WTC11 (cell line): ENCODE measurements at regions of chr6 and their contacts with region 1.

Region 1: GRCh38 chr6:12275087-12275486 is 15.1 kb upstream of the EDN1 start:
- DNase-seq: no peak
- ATAC-seq: no peak
- H3K4me3 Mint-ChIP-seq: no peak overlapping the region
- H3K27ac Mint-ChIP-seq: no peak overlapping the region
- H3K4me1 Mint-ChIP-seq: no peaks in the 10 kb centered on the region
- H3K27me3 Mint-ChIP-seq: no peaks in the 10 kb centered on the region
- CTCF ChIP-seq: no peak

Region 2: DNA sequence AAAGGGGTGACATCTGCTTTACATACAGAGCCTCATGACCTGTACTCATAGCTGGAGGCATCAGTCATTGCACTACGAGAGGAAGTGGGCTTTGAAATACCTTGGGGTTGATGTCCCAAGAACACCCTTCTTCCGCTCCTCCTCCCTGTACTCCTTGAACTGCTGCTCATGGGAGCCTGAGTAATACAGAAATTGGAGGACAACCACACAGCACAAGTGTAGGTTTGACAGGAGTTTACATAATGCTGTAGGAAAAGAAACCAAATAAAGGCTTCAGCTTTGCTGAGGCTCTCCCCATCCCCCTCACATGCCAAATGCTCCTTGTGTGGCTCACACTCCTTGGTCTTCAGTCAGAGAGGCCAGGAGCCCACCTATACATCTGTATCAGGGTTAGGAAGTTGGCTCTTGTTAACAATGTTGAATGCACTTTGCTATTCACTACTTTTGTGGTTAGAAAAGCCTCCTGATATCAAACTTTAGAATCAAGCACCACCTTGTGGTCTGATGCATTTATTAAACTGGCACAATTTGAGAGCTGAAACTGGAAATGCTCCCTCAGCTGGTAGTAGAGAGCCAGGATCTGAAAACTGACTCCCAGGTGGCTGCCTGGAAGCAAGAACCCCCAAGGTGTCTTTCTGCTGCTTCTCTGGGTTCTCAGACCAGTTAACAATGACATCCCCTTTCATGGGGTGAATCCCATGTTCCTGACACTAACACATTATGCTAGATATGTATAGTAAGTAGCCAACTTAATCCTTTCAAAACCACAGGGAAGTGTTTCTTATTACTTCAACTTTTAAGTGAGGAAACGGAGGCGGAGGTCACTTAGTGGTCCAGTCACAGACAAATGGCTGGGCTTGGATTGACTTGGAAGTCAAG is 41.2 kb before region 1 on chr6:
- CTCF ChIA-PET with region 1: no interaction called
- POLR2A ChIA-PET with region 1: interaction called, 11 read pairs
- DNase-seq: no peak
- ATAC-seq: peak; percentile 78
- H3K4me3 Mint-ChIP-seq: no peak overlapping the region
- H3K27ac Mint-ChIP-seq: no peak overlapping the region
- H3K4me1 Mint-ChIP-seq: peaks cover 8% of the 10 kb centered on the region
- H3K27me3 Mint-ChIP-seq: no peaks in the 10 kb centered on the region
- CTCF ChIP-seq: no peak

Region 3: GRCh38 chr6:12262236-12263061 is 12.6 kb before region 1 on chr6:
- CTCF ChIA-PET with region 1: no interaction called
- POLR2A ChIA-PET with region 1: no interaction called
- DNase-seq: no peak
- ATAC-seq: no peak
- H3K4me3 Mint-ChIP-seq: no peak overlapping the region
- H3K27ac Mint-ChIP-seq: no peak overlapping the region
- H3K4me1 Mint-ChIP-seq: peaks cover 5% of the 10 kb centered on the region
- H3K27me3 Mint-ChIP-seq: no peaks in the 10 kb centered on the region; the same call in 1 of the 2 replicates
- CTCF ChIP-seq: no peak